Cardiac septum (tissue), 1 donor: ENCODE measurements at regions of chr5 and their contacts with region 1.

Region 1: GRCh38 chr5:156800929-156801328 is 49.2 kb upstream of the PPP1R2B start:
- DNase-seq: no peak

Region 2: DNA sequence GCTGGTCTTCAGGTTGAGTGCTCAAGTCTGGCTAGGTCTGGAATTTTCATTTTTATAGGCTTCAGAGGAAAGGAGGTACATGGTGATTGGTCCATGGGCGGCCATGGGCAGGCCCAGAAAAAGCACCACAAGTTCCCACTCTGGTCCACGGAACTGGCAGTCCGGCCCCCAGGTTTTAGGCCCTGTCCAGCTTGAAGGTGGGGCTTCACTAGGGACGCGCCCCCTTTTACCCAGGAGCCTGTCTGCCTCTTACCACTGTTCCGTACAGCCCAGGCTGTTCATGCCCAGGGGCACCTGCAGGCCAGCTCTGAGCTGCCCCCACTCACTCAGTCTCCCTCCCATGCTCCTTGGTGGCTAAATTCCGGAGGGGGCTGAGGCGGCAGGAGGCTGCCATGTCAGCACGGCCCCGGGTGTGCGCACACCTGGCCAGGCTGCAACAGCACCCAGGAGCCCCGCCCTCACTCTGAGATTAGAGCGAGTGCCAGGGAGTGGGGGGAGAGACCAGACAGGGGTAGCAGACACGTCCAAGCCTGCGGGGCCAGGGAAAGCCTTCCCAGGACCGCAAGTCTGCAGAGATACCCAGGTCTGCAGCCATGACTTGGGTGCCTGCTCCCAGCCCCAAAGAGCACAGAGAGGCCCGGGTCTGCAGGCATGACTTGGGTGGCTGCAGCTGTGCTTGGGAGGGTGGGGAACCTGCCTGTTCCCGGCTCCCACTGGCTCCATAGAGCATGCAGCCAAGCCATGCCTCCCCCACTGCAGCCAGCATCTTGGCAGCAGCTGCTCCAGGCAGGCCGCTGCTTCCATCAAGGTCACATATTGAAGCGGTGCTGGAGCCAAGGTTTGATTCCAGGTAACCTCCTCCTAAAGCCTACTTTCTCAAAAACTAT is 864.2 kb before region 1 on chr5:
- intact Hi-C with region 1: loop called (anchors 5 kb)
- DNase-seq: no peak

Region 3: GRCh38 chr5:156755421-156756087 is 45.4 kb before region 1 on chr5:
- intact Hi-C with region 1: no loop called
- DNase-seq: no peak